ENCODE measurements at regions of chr18 and their contacts with region 1.

Region 1: GRCh38 chr18:73901566-73901965 is 246.1 kb downstream of the FBXO15 start:
- DNase-seq: no peak
- ATAC-seq: no peak
- H3K4me3 ChIP-seq: no peak overlapping the region
- H3K27ac ChIP-seq: no peak overlapping the region
- H3K4me1 ChIP-seq: no peaks in the 10 kb centered on the region
- H3K27me3 ChIP-seq: peaks cover 0 to 2% (median 0%) of the 10 kb centered on the region in 3 donors
- CTCF ChIP-seq: no peak

Region 2: DNA sequence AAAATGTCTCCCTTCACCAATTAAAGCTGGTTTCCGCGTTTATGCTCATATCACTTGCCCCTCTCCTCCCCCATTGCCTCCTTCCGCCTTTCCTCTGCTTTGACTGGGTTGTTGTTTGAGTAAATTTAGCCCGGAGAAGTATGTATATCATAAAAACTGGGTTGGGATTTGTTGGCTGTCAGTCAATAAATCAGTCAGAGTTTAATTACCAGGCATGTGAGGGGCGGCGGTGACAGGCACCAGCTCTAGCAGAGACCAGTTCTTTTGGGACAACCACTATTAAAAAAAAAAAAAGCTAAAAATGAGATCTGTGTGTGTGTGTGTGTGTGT is 1908.3 kb after region 1 on chr18:
- intact Hi-C with region 1: loop called in 1 of 2 experiments (anchors 5 kb)
- DNase-seq: no peak
- ATAC-seq: no peak
- H3K4me3 ChIP-seq: no peak overlapping the region
- H3K27ac ChIP-seq: no peak overlapping the region
- H3K4me1 ChIP-seq: no peaks in the 10 kb centered on the region
- H3K27me3 ChIP-seq: peaks cover 0 to 6% (median 0%) of the 10 kb centered on the region in 3 donors
- CTCF ChIP-seq: no peak